PC-9 (cell line): ENCODE measurements at regions of chr9 and their contacts with region 1.

Region 1: GRCh38 chr9:101458955-101459631 is 23.5 kb upstream of the ALDOB start:
- DNase-seq: peak; percentile 12 to 60
- H3K4me3 ChIP-seq: no peak overlapping the region
- H3K27ac ChIP-seq: no peak overlapping the region
- H3K4me1 ChIP-seq: peaks cover 8% of the 10 kb centered on the region
- H3K27me3 ChIP-seq: no peaks in the 10 kb centered on the region
- CTCF ChIP-seq: peak; percentile 73

Region 2: GRCh38 chr9:101117161-101117560 is 341.9 kb before region 1 on chr9:
- CTCF ChIA-PET with region 1: no interaction called
- POLR2A ChIA-PET with region 1: no interaction called
- intact Hi-C with region 1: no loop called
- DNase-seq: no peak
- H3K4me3 ChIP-seq: no peak overlapping the region
- H3K27ac ChIP-seq: no peak overlapping the region
- H3K4me1 ChIP-seq: no peaks in the 10 kb centered on the region
- H3K27me3 ChIP-seq: no peaks in the 10 kb centered on the region
- CTCF ChIP-seq: no peak

Region 3: DNA sequence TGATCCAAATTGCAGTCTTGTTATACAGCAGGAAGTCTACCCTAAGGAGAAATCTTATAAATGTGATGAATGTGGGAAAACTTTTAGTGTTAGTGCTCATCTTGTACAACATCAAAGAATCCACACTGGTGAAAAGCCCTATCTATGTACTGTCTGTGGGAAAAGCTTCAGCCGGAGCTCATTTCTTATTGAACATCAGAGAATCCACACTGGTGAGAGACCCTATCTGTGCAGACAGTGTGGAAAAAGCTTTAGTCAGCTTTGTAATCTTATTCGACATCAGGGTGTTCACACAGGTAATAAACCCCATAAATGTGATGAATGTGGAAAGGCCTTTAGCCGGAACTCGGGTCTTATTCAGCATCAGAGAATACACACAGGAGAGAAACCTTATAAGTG is 50.0 kb before region 1 on chr9:
- CTCF ChIA-PET with region 1: no interaction called
- POLR2A ChIA-PET with region 1: no interaction called
- intact Hi-C with region 1: no loop called
- DNase-seq: no peak
- H3K4me3 ChIP-seq: 0 out of 2 replicates have a peak overlapping the region, but pooled peaks have one; percentile 14
- H3K27ac ChIP-seq: no peak overlapping the region
- H3K4me1 ChIP-seq: no peaks in the 10 kb centered on the region
- H3K27me3 ChIP-seq: no peaks in the 10 kb centered on the region
- CTCF ChIP-seq: no peak

Region 4: DNA sequence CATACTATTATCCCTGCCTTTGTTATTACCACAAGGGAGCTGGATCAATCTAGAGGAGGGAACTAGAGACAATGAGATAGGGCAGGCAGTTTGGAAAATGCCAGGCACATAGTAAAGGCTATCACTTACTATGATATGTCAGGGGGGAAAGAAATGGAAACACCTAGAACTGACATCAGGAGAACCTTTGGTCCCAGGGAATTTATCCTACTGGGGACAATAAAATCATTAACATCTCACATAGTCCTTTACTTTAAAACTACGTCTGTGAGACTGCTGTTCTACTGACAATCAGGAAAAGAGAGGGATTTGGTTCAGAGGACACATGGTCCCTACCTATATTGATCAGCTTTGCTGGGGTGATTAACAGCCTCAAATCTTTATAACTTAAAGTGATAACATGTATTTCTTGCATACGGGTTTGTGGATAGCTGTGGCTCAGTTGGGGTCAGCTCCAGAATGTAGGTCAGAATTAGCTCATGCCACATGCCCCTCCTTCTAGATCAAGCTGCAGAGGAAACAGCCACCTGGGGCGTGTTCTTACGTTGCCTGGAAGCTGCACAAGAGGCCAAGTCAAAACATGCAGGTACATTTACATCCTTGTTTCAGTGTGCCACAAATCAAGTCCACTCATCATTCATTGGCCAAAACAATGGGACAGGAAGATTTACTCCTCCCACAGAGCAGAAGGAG is 20.4 kb after region 1 on chr9:
- CTCF ChIA-PET with region 1: interaction called, 15 read pairs
- POLR2A ChIA-PET with region 1: no interaction called
- intact Hi-C with region 1: no loop called
- DNase-seq: no peak
- H3K4me3 ChIP-seq: no peak overlapping the region
- H3K27ac ChIP-seq: no peak overlapping the region
- H3K4me1 ChIP-seq: no peaks in the 10 kb centered on the region
- H3K27me3 ChIP-seq: peaks cover 22% of the 10 kb centered on the region
- CTCF ChIP-seq: no peak